H1 (cell line): ENCODE measurements at regions of chr2 and their contacts with region 1.

Region 1: GRCh38 chr2:168705534-168706470 is 96.6 kb upstream of the NOSTRIN start:
- DNase-seq: no peak
- H3K4me3 ChIP-seq: no peak overlapping the region
- H3K27ac ChIP-seq: no peak overlapping the region
- H3K4me1 ChIP-seq: 0 out of 7 replicates have a peak, but pooled peaks cover 0 to 1% (median 0%) of the 10 kb centered on the region in 4 experiments
- H3K27me3 ChIP-seq: no peaks in the 10 kb centered on the region
- CTCF ChIP-seq: peak in 2 of 3 experiments; percentile 23 to 39; a peak in 2 of 4 replicates
- EP300 ChIP-seq: no peak
- POLR2A ChIP-seq: no peak
- RAD21 ChIP-seq: peak; percentile 51 to 62

Region 2: GRCh38 chr2:168536925-168537466 is 168.8 kb before region 1 on chr2:
- CTCF ChIA-PET with region 1: no interaction called
- POLR2A ChIA-PET with region 1: no interaction called
- DNase-seq: no peak
- H3K4me3 ChIP-seq: no peak overlapping the region
- H3K27ac ChIP-seq: no peak overlapping the region
- H3K4me1 ChIP-seq: peaks cover 0 to 7% (median 2%) of the 10 kb centered on the region in 4 experiments; a peak in 4 of 7 replicates
- H3K27me3 ChIP-seq: no peaks in the 10 kb centered on the region
- CTCF ChIP-seq: no peak
- EP300 ChIP-seq: no peak
- POLR2A ChIP-seq: no peak
- RAD21 ChIP-seq: no peak

Region 3: DNA sequence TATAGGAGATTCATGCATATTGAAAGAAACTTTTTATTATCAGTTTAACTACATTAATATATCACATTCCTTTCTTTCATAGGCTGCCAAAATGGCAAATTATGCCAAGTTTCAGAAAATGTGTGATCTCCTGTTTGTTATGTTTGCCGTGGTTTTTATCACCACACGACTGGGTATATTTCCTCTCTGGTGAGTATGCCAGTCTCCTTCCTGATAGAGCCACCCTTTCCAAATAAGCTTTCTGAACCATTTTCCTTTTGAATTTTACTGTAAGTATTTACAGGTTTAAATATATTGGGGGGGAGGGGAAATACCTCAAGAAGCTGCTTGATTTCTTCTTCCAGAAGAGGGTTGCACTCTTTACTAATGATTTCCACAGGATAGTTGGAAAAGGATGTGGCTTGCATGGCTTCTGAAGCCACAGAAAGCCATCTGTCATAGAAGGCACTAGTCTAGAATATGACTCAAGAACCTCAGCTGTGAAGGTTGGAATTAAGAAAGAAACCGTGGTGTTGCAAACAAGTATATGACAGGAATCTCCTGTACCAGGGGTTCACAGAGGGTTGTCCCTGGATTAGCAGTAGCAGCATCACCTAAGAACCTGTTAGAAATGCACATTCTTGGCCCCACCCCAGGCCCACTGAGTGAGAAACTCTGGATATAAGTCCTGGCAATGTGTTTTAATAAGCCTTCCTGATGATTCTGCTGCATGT is 12.1 kb after region 1 on chr2:
- CTCF ChIA-PET with region 1: interaction called, 11 read pairs
- POLR2A ChIA-PET with region 1: no interaction called
- DNase-seq: no peak
- H3K4me3 ChIP-seq: no peak overlapping the region
- H3K27ac ChIP-seq: no peak overlapping the region
- H3K4me1 ChIP-seq: no peaks in the 10 kb centered on the region
- H3K27me3 ChIP-seq: no peaks in the 10 kb centered on the region
- CTCF ChIP-seq: no peak
- EP300 ChIP-seq: no peak
- POLR2A ChIP-seq: no peak
- RAD21 ChIP-seq: no peak

Region 4: GRCh38 chr2:168835969-168836368 is 130.2 kb after region 1 on chr2:
- CTCF ChIA-PET with region 1: no interaction called
- POLR2A ChIA-PET with region 1: no interaction called
- DNase-seq: no peak
- H3K4me3 ChIP-seq: no peak overlapping the region
- H3K27ac ChIP-seq: no peak overlapping the region
- H3K4me1 ChIP-seq: no peaks in the 10 kb centered on the region
- H3K27me3 ChIP-seq: no peaks in the 10 kb centered on the region
- CTCF ChIP-seq: no peak
- EP300 ChIP-seq: no peak
- POLR2A ChIP-seq: no peak
- RAD21 ChIP-seq: no peak